Gastrocnemius medialis (tissue), 4 donors: ENCODE measurements at regions of chr5 and their contacts with region 1.

Region 1: GRCh38 chr5:138226910-138227309 is 13.8 kb upstream of the CDC23 start:
- DNase-seq: no peak
- ATAC-seq: no peak
- H3K4me3 ChIP-seq: no peak overlapping the region
- H3K27ac ChIP-seq: no peak overlapping the region
- H3K4me1 ChIP-seq: peaks cover 0 to 3% of the 10 kb centered on the region in 2 donors
- H3K27me3 ChIP-seq: no peaks in the 10 kb centered on the region
- CTCF ChIP-seq: no peak
- POLR2A ChIP-seq: no peak

Region 2: DNA sequence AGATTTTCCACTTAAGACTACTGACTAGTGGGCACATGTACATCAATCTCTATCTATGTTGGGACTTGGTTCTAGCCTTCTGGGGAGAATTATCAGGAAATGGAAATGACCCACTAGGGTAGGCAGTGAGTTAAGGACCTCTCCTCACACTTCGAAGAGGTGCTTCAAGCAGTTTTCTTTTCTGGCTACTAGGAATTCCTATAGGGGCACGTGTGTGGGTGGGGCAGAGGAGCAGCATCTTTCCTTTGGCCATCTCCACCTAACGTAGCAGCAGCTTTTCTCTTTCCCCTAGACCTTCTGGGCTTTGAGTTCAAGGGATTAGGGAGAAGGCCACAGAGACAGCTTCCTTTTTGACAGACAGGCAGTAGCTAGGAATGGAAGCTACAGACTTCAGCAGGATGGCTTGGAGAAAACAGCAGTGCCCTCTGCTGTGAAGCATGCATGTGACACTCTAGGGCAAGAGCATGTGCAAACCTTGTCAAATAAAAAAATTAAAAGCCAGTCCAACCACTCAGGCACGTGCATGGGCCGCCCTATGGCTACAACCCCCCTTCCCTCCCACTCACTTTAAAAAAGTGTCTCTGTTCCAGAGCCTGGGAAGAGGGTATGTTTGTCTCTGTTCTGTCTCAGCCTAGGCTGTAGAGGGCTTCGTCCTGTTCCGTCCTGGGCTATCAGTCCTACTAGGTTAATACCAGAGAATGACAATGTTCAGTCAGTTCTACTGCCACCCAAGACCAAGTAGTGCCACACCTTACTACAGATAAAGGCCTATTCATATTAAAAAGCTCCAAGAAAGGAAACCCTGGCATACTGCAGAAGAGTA is 56.2 kb after region 1 on chr5:
- in situ Hi-C with region 1: no loop called
- intact Hi-C with region 1: loop called (anchors 5 kb)
- DNase-seq: no peak
- ATAC-seq: no peak
- H3K4me3 ChIP-seq: no peak overlapping the region
- H3K27ac ChIP-seq: no peak overlapping the region
- H3K4me1 ChIP-seq: no peaks in the 10 kb centered on the region
- H3K27me3 ChIP-seq: no peaks in the 10 kb centered on the region
- CTCF ChIP-seq: no peak
- POLR2A ChIP-seq: no peak

Region 3: GRCh38 chr5:138352071-138352721 is 125.3 kb after region 1 on chr5 and contains the start of gene KDM3B:
- in situ Hi-C with region 1: no loop called
- intact Hi-C with region 1: loop called (anchors 5 kb)
- DNase-seq: peak; percentile 42 to 83
- ATAC-seq: peak; percentile 50 to 80
- H3K4me3 ChIP-seq: peak within 1 kb of the TSS; percentile 73 to 98 (median 91)
- H3K27ac ChIP-seq: peak within 1 kb of the TSS; percentile 89 to 98 (median 95)
- H3K4me1 ChIP-seq: peaks cover 28 to 41% of the 10 kb centered on the region in 2 donors
- H3K27me3 ChIP-seq: no peaks in the 10 kb centered on the region
- CTCF ChIP-seq: peak; percentile 85 to 100 (median 97)
- POLR2A ChIP-seq: no peak
- total RNA-seq, gene KDM3B: 49.4 to 100 (median 74.2) TPM

Region 4: DNA sequence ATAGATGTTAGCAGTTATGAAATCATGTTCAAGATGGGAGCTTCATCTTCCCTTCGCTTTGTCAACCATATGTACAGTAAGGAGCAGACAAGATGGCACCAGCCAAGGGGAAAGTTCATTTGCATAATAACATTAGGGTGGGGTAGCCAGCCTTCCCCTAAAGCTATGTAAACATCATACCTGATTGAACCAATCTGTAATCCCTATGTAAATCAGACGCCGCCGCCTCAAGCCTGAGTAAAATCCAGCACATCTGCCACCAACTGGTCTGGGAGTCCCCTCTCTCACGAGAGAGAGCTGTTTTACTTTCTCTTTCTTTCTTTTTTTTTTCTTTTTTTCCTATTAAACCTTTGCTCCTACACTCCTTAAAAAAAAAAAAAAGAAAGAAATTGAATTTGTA is 181.1 kb after region 1 on chr5:
- in situ Hi-C with region 1: loop called in 3 of 4 experiments (anchors 10 to 25 kb)
- intact Hi-C with region 1: no loop called
- DNase-seq: no peak
- ATAC-seq: no peak
- H3K4me3 ChIP-seq: no peak overlapping the region
- H3K27ac ChIP-seq: no peak overlapping the region
- H3K4me1 ChIP-seq: no peaks in the 10 kb centered on the region
- H3K27me3 ChIP-seq: no peaks in the 10 kb centered on the region
- CTCF ChIP-seq: no peak
- POLR2A ChIP-seq: no peak

Region 5: GRCh38 chr5:138418444-138418843 is 191.5 kb after region 1 on chr5:
- in situ Hi-C with region 1: loop called in 2 of 4 experiments (anchors 10 to 25 kb)
- intact Hi-C with region 1: no loop called
- DNase-seq: no peak
- ATAC-seq: no peak
- H3K4me3 ChIP-seq: no peak overlapping the region
- H3K27ac ChIP-seq: no peak overlapping the region
- H3K4me1 ChIP-seq: no peaks in the 10 kb centered on the region
- H3K27me3 ChIP-seq: no peaks in the 10 kb centered on the region
- CTCF ChIP-seq: no peak
- POLR2A ChIP-seq: no peak